ENCODE measurements at regions of chr3 and their contacts with region 1.

Region 1: DNA sequence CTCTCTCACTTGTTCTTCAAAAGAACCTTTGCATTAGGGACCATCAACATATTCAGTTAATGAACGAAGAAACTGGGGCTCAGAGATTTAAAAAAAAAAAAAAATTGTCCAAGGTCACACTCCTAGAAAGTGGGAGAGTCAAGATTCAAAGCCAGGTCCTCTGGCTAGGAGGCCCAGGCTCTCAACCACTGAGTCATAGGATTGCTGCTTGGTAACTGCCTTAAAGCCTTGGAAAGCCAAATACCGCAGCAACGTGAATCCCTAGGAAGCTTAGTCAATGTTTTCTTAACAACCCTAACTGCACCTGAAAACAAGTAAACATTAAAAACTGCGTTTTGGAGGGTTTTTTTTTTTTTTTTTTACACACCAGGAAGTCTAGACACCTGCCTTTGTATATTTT is 156.8 kb downstream of the WNT5A start:
- DNase-seq: peak; percentile 94
- H3K4me3 ChIP-seq: no peak overlapping the region
- CTCF ChIP-seq: no peak

Region 2: GRCh38 chr3:55160241-55160983 is 169.9 kb before region 1 on chr3:
- CTCF ChIA-PET with region 1: no interaction called
- POLR2A ChIA-PET with region 1: interaction called, 15 read pairs
- DNase-seq: peak; percentile 99
- H3K4me3 ChIP-seq: peak overlapping the region; percentile 13
- CTCF ChIP-seq: no peak

Region 3: DNA sequence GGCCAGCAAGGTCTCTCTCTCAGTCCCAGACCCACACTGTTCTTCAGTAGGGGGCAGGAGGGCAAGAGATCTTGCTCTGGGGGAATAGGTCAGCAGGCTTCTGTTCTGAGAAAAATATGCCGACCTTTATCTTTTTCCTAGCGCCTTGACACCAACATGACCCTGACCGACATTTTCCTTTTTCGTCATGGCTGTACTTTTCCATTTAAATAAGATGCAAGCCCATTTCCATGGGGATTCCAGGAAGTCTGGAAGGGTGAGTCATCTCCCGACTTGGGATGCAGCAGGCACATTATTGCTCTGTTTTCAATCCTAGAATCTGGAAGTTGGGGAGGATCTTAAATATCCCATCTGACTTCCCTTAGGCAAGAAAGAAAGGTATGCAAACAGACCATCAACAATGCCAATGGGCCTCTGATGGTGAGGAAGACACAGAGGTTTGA is 141.0 kb before region 1 on chr3:
- CTCF ChIA-PET with region 1: no interaction called
- POLR2A ChIA-PET with region 1: interaction called, 25 read pairs
- DNase-seq: peak; percentile 76
- H3K4me3 ChIP-seq: no peak overlapping the region
- CTCF ChIP-seq: no peak

Region 4: GRCh38 chr3:55198543-55198942 is 131.8 kb before region 1 on chr3:
- CTCF ChIA-PET with region 1: no interaction called
- POLR2A ChIA-PET with region 1: interaction called, 11 read pairs
- DNase-seq: peak; percentile 95
- H3K4me3 ChIP-seq: no peak overlapping the region
- CTCF ChIP-seq: no peak

Region 5: GRCh38 chr3:55364456-55364855 is 34.1 kb after region 1 on chr3:
- CTCF ChIA-PET with region 1: interaction called, 3 read pairs
- POLR2A ChIA-PET with region 1: interaction called, 15 read pairs
- DNase-seq: peak; percentile 95
- H3K4me3 ChIP-seq: no peak overlapping the region
- CTCF ChIP-seq: no peak

Region 6: DNA sequence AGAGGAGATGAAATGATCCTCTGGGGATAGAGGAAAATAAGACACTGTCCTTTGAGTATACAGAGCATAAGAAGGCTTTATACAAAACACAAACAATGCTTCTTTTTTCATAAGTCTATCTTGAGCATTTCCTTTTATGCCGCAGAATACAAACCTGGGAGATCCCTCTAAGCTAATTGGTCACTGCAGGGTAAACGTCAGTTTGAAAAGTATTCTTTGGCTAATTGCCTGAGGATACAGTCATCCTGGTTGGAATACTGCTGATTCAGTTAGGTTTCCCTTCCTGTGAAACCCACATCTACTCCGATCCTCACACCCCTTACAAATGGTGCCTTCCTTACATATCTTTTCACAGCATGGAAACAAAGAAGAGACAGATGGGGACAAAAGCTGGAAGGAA is 146.2 kb after region 1 on chr3:
- CTCF ChIA-PET with region 1: interaction called, 4 read pairs
- POLR2A ChIA-PET with region 1: interaction called, 20 read pairs
- DNase-seq: no peak
- H3K4me3 ChIP-seq: peak overlapping the region; percentile 98
- CTCF ChIP-seq: no peak

Measured in AG04449 (cell line).